OCI-LY7 (cell line): ENCODE measurements at regions of chr7 and their contacts with region 1.

Region 1: GRCh38 chr7:135977007-135977741 is at the start of gene MTPN:
- DNase-seq: peak; percentile 98
- H3K4me3 ChIP-seq: peak within 1 kb of the TSS; percentile 97
- H3K27ac ChIP-seq: peak within 1 kb of the TSS; percentile 93
- H3K4me1 ChIP-seq: peaks cover 54% of the 10 kb centered on the region
- CTCF ChIP-seq: no peak
- total RNA-seq, gene MTPN: 83.9 and 91.3 TPM in 2 replicates

Region 2: GRCh38 chr7:135170274-135170997 is 806.7 kb before region 1 on chr7 and contains the start of gene CYREN:
- CTCF ChIA-PET with region 1: no interaction called
- POLR2A ChIA-PET with region 1: no interaction called
- intact Hi-C with region 1: loop called (anchors 5 kb)
- DNase-seq: peak; percentile 96
- H3K4me3 ChIP-seq: peak within 1 kb of the TSS; percentile 76
- H3K27ac ChIP-seq: peak within 1 kb of the TSS; percentile 82
- H3K4me1 ChIP-seq: peaks cover 32% of the 10 kb centered on the region
- CTCF ChIP-seq: peak; percentile 80
- total RNA-seq, gene CYREN: 64.0 and 69.4 TPM in 2 replicates

Region 3: GRCh38 chr7:135558337-135558767 is 418.8 kb before region 1 on chr7:
- CTCF ChIA-PET with region 1: no interaction called
- POLR2A ChIA-PET with region 1: no interaction called
- intact Hi-C with region 1: loop called (anchors 10 kb)
- DNase-seq: peak; percentile 85
- H3K4me3 ChIP-seq: peak overlapping the region; percentile 97
- H3K27ac ChIP-seq: peak overlapping the region; percentile 92
- H3K4me1 ChIP-seq: peaks cover 41% of the 10 kb centered on the region
- CTCF ChIP-seq: peak; percentile 89

Region 4: GRCh38 chr7:135965602-135966001 is 11.6 kb before region 1 on chr7:
- CTCF ChIA-PET with region 1: interaction called, 3 read pairs
- POLR2A ChIA-PET with region 1: interaction called, 40 read pairs
- intact Hi-C with region 1: loop called (anchors 1 kb)
- DNase-seq: no peak
- H3K4me3 ChIP-seq: peak overlapping the region; percentile 55
- H3K27ac ChIP-seq: peak overlapping the region; percentile 88
- H3K4me1 ChIP-seq: peaks cover 97% of the 10 kb centered on the region
- CTCF ChIP-seq: no peak

Region 5: GRCh38 chr7:136359333-136359903 is 382.2 kb after region 1 on chr7:
- CTCF ChIA-PET with region 1: no interaction called
- POLR2A ChIA-PET with region 1: interaction called, 3 read pairs
- intact Hi-C with region 1: loop called (anchors 5 kb)
- DNase-seq: peak; percentile 95
- H3K4me3 ChIP-seq: peak overlapping the region; percentile 49
- H3K27ac ChIP-seq: peak overlapping the region; percentile 100
- H3K4me1 ChIP-seq: peaks cover 79% of the 10 kb centered on the region
- CTCF ChIP-seq: 0 out of 2 replicates have a peak, but pooled peaks have one; percentile 25